Heart right ventricle (tissue), 16 donors: ENCODE measurements at regions of chr1 and their contacts with region 1.

Region 1: GRCh38 chr1:112457241-112457640 is 51.5 kb upstream of the WNT2B start:
- DNase-seq: no peak
- ATAC-seq: no peak
- H3K4me3 ChIP-seq: no peak overlapping the region
- H3K27ac ChIP-seq: peak overlapping the region in 1 of 10 donors; percentile 11
- H3K4me1 ChIP-seq: peaks cover 0 to 23% (median 4%) of the 10 kb centered on the region in 9 donors
- H3K27me3 ChIP-seq: no peaks in the 10 kb centered on the region
- CTCF ChIP-seq: no peak

Region 2: DNA sequence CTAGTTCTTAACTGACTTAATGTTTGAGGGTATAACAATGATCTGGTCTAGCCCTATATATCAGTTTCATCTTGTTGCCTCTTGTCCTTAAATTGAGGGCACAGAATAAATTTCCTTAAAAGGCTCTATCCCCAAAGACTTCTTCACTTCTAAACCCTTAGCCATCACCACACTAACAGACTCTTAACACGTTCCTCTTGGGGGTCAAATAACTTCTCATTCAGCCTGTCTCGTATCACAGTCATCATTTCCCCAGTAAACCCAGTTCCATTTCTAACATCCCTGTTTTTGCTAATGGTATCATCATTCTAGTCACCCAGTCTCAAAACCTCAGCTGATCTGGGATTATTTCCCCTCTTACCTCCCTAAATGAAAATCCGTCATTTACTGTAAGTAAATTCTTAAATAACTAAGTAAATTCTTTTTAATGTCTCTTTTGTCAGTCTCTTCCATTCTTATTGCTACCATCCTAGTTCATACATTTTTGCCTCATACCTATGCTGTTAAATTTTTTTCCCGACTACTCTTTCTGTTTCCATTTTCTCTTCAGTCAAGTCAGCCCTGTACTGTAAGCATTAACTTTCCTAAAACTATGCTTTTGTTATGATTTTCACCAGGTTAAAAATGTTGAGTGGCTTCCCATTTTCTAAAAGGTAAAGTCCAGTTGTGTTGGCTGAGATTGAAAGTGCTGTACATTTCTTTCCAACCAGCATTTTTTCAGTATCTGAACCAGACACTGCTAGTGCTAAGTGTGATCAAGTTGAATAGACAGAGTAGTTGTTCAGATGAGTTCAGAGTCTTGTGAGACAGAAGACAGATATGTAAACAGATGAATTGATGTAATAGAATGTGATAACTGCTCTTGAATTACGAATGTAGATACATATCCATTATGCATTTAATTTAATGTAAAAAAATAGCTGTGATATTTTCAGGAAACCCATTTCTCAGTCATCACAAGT is 54.3 kb before region 1 on chr1:
- intact Hi-C with region 1: loop called in 1 of 10 experiments (anchors 5 kb)
- DNase-seq: no peak
- ATAC-seq: no peak
- H3K4me3 ChIP-seq: no peak overlapping the region
- H3K27ac ChIP-seq: no peak overlapping the region
- H3K4me1 ChIP-seq: peaks cover 0 to 76% (median 56%) of the 10 kb centered on the region in 9 donors
- H3K27me3 ChIP-seq: no peaks in the 10 kb centered on the region
- CTCF ChIP-seq: no peak